Panc1 (cell line): ENCODE measurements at regions of chr16 and their contacts with region 1.

Region 1: DNA sequence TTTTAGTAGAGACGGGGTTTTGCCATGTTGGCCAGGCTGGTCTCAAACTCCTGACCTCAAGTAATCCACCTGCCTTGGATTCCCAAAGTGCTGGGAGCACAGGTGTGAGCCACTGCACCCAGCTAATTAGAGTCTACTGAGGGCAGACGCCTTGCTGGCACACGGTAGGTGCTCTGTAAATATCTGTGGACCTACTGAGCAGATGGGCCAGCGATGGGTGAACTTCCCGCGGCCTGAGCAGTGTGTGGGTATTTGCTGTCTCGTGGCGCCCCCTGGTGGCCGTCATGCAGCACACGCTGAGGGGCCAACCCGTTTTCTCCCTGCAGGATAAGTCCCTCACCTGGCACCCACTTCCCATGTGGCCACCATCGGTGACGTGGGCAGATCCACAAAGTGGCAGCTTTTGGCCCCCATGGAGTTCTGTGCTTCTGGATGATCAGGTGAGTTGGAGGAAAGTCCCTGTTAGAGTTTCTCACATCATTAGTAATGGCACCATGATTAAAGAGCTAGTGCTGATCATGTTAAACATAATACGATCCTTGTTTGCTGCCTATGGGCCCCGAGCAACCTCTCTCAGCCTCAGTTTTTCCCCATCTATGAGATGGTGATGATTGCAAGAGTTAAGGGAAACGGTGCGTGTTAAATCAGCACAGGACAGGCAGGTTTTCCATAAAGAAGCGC is 40.7 kb downstream of the ZDHHC7 start:
- DNase-seq: peak; percentile 52
- ATAC-seq: peak; percentile 93
- H3K4me3 ChIP-seq: no peak overlapping the region
- H3K27ac ChIP-seq: no peak overlapping the region
- H3K4me1 ChIP-seq: 0 out of 2 replicates have a peak, but pooled peaks cover 5% of the 10 kb centered on the region
- H3K27me3 ChIP-seq: no peaks in the 10 kb centered on the region
- CTCF ChIP-seq: peak; percentile 88

Region 2: GRCh38 chr16:84925092-84925772 is 45.4 kb before region 1 on chr16:
- CTCF ChIA-PET with region 1: interaction called, 5 read pairs
- POLR2A ChIA-PET with region 1: no interaction called
- in situ Hi-C with region 1: no loop called
- intact Hi-C with region 1: loop called (anchors 5 kb)
- DNase-seq: peak; percentile 39
- ATAC-seq: peak; percentile 78
- H3K4me3 ChIP-seq: no peak overlapping the region
- H3K27ac ChIP-seq: no peak overlapping the region
- H3K4me1 ChIP-seq: no peaks in the 10 kb centered on the region
- H3K27me3 ChIP-seq: no peaks in the 10 kb centered on the region
- CTCF ChIP-seq: peak; percentile 90

Region 3: DNA sequence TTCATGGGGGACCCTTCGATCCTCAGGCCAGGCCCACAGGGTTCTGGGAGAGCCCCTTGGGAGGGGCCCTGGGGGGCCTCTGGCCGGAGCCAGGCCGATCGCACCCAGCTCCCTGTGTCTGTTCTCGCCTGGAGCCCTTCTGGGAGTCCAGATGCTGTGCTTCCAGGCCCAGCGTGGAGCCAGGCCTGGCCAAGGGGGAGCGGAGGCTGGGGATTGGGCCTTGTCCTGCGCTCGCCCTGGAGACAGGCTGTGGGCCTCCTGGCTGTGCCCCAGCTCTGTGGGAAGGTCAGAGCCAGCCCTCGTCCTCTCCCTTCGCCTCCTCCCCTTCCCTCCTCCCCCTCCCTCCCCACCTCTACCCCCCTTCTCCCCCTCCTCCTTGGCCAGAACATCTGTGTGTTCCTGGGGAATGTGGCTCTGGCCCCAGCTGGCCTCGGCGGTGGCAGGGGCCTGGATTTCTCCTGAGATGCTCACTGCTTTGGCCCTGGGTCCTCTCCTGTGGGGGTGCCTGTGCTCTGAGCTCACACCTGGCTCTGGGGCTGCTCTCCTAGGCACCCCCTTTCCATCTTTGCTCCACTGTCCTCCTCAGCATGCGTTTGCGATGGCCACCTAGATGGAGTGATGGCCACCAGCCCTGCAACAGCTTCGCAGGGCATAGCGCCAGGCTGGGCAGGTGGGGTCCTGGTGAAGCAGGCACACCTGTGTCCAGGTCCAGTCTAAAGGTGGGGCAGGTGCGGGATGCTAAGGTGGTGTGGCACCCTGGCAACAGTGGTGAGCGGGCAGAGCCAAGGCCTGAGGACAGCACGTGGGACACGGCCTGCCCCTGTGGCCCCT is 232.3 kb after region 1 on chr16:
- CTCF ChIA-PET with region 1: no interaction called
- POLR2A ChIA-PET with region 1: no interaction called
- in situ Hi-C with region 1: no loop called
- intact Hi-C with region 1: no loop called
- DNase-seq: no peak
- ATAC-seq: 0 out of 2 replicates have a peak, but pooled peaks have one; percentile 46
- H3K4me3 ChIP-seq: no peak overlapping the region
- H3K27ac ChIP-seq: 0 out of 2 replicates have a peak overlapping the region, but pooled peaks have one; percentile 17
- H3K4me1 ChIP-seq: peaks cover 10% of the 10 kb centered on the region
- H3K27me3 ChIP-seq: no peaks in the 10 kb centered on the region
- CTCF ChIP-seq: no peak